ENCODE measurements at regions of chr14 and their contacts with region 1.

Region 1: DNA sequence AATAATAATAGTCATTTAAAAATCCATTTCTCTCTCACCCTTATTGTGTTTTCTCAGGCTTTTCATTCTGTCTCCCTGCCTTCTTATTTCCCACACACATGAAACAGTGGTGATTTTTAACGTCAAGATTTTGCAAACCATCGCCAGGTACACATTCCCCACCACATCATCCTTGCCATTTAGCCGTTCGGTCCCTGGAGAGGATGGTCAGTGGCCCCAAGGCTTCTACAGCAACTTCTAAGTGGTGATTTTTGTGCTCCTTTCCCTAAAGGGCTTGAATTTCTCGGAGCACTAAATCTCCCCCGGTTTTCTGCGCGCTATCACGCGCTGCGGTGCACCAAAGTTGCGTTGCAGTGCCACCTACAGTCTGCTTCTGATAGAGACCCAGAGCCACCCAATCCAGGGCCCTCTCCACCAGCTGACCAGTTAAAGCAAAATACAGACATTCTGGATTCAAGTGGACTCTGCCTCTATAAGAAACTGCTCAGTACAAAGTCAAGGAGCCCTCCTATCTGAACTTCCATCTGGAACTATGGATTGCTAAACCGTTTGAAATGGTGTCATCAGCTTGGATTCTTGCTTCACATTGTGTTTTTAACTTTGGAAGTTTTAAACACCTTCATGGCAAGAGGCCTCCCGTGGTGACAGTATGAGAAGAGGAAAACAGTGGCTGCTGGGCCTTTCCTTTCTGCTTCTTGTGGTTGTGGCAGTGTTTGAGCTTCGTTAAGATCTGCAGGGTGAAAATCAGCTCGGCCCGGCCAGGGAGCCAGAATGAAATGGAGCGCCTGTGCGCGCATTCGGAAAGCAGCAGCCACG is 234.0 kb downstream of the SPTSSA start:
- DNase-seq: no peak
- H3K4me3 ChIP-seq: no peak overlapping the region; the same call in 1 of the 2 replicates
- CTCF ChIP-seq: peak; percentile 72

Region 2: DNA sequence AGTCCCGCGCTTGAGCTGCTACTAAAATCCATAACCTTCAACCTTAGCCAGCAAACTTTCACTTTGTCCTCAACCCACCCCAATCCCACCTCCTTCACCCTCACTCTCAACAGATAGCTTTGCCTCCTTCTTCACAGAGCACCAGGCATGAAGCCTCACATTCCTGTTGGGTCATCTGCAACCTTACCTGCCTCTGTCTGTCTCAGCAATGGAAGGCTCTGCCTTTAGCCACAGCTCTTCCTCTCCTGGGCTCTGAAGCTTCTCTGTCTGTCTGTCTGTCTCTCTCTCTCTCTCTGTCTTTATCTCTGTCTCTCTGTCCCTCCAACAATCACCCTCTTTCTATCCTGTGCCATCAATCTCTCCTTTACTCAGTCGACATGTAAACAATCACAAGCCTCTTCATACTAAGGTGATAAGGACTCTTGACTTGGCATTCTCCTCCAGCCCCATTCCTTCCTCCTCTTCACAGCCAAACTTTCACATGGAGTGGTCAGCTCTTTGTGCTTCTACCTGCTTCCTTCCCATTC is 13.2 kb after region 1 on chr14:
- CTCF ChIA-PET with region 1: interaction called, 10 read pairs
- POLR2A ChIA-PET with region 1: no interaction called
- DNase-seq: no peak
- H3K4me3 ChIP-seq: no peak overlapping the region
- CTCF ChIP-seq: no peak